ENCODE measurements at regions of chr9 and their contacts with region 1.

Region 1: DNA sequence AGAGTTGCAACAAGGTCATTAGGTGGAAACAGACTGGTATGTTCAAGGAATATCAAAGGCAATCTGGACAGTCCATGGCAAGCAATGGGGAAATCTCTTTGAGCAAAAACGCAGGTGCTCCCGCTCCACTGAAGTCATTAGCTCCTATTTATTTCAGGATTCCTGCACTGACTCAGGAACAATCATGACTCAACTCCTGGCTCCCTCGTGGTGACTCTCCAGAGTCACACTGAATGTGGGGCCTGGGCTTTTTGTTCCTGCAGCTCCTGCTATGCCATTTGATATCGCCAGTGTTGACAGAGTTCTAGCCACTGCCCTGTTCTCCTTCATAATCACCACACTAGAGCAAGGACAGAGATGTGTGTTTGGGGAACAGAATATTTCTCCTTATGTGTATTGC is 187.2 kb upstream of the ZNF462 start:
- DNase-seq: peak; percentile 85 to 92
- ATAC-seq: peak; percentile 98
- H3K4me3 ChIP-seq: no peak overlapping the region
- H3K27ac ChIP-seq: peak overlapping the region; percentile 80 to 89 (median 84)
- H3K4me1 ChIP-seq: peaks cover 3 to 8% of the 10 kb centered on the region in 2 donors
- H3K27me3 ChIP-seq: no peaks in the 10 kb centered on the region
- CTCF ChIP-seq: no peak
- POLR2A ChIP-seq: no peak

Region 2: DNA sequence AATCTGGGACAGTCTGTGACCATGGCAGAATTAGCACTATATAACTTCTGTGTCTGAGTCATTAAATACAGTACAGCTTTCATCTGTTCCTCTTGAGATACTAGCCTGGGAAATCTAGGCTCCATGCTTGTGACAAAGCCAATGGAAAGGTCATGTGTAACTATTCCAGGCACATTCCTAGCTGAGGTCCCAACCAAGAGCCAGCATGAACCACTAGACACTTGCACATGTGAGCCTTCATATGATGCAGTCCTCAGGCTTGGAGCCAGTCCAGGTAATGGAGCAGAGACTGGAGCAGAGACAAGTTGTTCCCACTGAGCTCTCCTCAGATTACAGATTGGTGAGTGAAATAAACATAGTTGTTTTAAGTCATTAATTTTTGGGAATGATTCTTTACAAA is 225.2 kb before region 1 on chr9:
- in situ Hi-C with region 1: no loop called
- intact Hi-C with region 1: loop called (anchors 2 kb)
- DNase-seq: peak; percentile 83 to 91
- ATAC-seq: peak; percentile 96 to 98
- H3K4me3 ChIP-seq: no peak overlapping the region
- H3K27ac ChIP-seq: peak overlapping the region; percentile 75 to 83 (median 80)
- H3K4me1 ChIP-seq: peaks cover 11 to 19% of the 10 kb centered on the region in 2 donors
- H3K27me3 ChIP-seq: no peaks in the 10 kb centered on the region
- CTCF ChIP-seq: no peak
- POLR2A ChIP-seq: no peak

Region 3: GRCh38 chr9:106726070-106726815 is 50.5 kb after region 1 on chr9:
- in situ Hi-C with region 1: no loop called
- intact Hi-C with region 1: loop called (anchors 5 kb)
- DNase-seq: peak; percentile 46 to 67
- ATAC-seq: peak; percentile 97 to 98
- H3K4me3 ChIP-seq: no peak overlapping the region
- H3K27ac ChIP-seq: peak overlapping the region; percentile 74 to 80 (median 77)
- H3K4me1 ChIP-seq: peaks cover 33 to 56% of the 10 kb centered on the region in 2 donors
- H3K27me3 ChIP-seq: no peaks in the 10 kb centered on the region
- CTCF ChIP-seq: no peak
- POLR2A ChIP-seq: no peak

Region 4: GRCh38 chr9:106929471-106930177 is 253.9 kb after region 1 on chr9:
- in situ Hi-C with region 1: no loop called
- intact Hi-C with region 1: no loop called
- DNase-seq: no peak
- ATAC-seq: no peak
- H3K4me3 ChIP-seq: no peak overlapping the region
- H3K27ac ChIP-seq: no peak overlapping the region
- H3K4me1 ChIP-seq: peaks cover 0 to 4% of the 10 kb centered on the region in 2 donors
- H3K27me3 ChIP-seq: no peaks in the 10 kb centered on the region
- CTCF ChIP-seq: no peak
- POLR2A ChIP-seq: no peak

Region 5: GRCh38 chr9:107080130-107080529 is 404.4 kb after region 1 on chr9:
- in situ Hi-C with region 1: no loop called
- intact Hi-C with region 1: no loop called
- DNase-seq: no peak
- ATAC-seq: no peak
- H3K4me3 ChIP-seq: no peak overlapping the region
- H3K27ac ChIP-seq: no peak overlapping the region
- H3K4me1 ChIP-seq: peaks cover 3 to 8% of the 10 kb centered on the region in 2 donors
- H3K27me3 ChIP-seq: no peaks in the 10 kb centered on the region
- CTCF ChIP-seq: no peak
- POLR2A ChIP-seq: no peak